ENCODE measurements at regions of chr10 and their contacts with region 1.

Region 1: DNA sequence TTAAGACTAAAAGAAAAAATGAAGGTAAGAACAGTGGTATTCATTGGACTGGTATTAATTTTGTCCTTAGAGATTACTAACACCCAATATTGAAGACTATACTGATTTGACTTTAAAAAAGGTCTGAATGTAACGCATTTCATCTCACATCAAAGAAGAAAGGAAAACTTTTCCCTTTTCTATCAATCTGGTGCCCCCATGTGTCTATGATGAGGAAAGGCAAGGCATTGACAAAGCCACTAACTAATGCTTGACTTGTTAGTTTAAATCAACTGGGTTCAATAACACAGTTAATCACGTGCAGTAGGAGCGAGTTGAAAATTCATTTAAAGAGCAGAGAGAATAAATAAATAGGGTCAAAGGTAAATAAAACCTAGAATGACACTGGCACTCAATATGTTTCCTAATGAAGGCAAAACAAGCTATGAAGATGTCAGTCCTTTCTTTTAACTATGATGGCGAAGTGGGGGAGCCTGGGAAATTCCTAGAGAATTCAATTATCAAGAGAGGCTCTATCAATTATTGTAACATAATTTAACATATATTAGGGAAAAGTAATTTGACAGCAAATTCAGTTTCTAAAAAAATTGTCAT is 180.9 kb downstream of the ANK3 start:
- DNase-seq: peak; percentile 8
- H3K4me3 ChIP-seq: no peak overlapping the region
- H3K27ac ChIP-seq: no peak overlapping the region
- H3K27me3 ChIP-seq: no peaks in the 10 kb centered on the region
- CTCF ChIP-seq: peak; percentile 92

Region 2: DNA sequence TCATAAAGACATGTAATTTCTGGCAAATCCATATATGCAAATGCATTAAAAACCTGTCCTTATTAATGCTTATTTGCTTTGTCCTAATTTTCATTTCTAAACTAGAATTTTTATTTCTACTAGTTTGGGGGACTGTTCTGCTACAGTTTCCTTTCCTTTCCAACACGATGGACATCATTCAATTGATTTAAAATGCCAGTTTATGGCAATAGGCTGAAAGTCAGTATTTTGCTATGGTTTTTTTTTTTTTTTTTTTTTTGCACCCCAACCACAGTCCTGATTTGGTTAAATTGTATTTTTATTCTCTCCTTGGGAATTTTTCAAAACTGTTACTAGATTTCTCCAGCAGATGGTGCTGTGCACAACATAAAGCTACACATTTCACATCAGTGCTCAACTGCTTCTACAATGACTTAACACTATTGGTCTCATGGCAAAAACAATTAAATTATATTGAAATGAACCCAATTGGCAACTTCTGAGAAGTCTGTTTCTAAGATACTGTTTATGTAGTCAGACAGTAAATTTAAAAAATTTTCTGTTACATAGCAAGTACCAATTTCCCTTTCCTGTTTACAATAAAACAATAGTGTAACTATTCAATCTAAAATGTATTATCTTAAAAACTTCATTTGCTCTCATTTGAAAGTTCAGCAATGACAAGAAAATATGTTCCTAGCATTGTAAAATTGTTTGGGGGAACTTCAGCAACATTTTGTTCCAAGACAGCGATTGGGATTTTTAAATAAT is 108.6 kb before region 1 on chr10:
- CTCF ChIA-PET with region 1: interaction called, 155 read pairs
- POLR2A ChIA-PET with region 1: interaction called, 10 read pairs
- DNase-seq: peak; percentile 16
- H3K4me3 ChIP-seq: no peak overlapping the region
- H3K27ac ChIP-seq: no peak overlapping the region
- H3K27me3 ChIP-seq: peaks cover 2% of the 10 kb centered on the region
- CTCF ChIP-seq: peak; percentile 64

Region 3: GRCh38 chr10:60155943-60156683 is 52.7 kb before region 1 on chr10:
- CTCF ChIA-PET with region 1: no interaction called
- POLR2A ChIA-PET with region 1: no interaction called
- DNase-seq: no peak
- H3K4me3 ChIP-seq: no peak overlapping the region
- H3K27ac ChIP-seq: no peak overlapping the region
- H3K27me3 ChIP-seq: peaks cover 3% of the 10 kb centered on the region
- CTCF ChIP-seq: no peak

Region 4: GRCh38 chr10:60170250-60170649 is 38.5 kb before region 1 on chr10:
- CTCF ChIA-PET with region 1: interaction called, 10 read pairs
- POLR2A ChIA-PET with region 1: no interaction called
- DNase-seq: peak; percentile 45
- H3K4me3 ChIP-seq: no peak overlapping the region
- H3K27ac ChIP-seq: no peak overlapping the region
- H3K27me3 ChIP-seq: no peaks in the 10 kb centered on the region
- CTCF ChIP-seq: no peak

Region 5: GRCh38 chr10:60224066-60224705 is 15.4 kb after region 1 on chr10:
- CTCF ChIA-PET with region 1: interaction called, 16 read pairs
- POLR2A ChIA-PET with region 1: no interaction called
- DNase-seq: no peak
- H3K4me3 ChIP-seq: no peak overlapping the region
- H3K27ac ChIP-seq: no peak overlapping the region
- H3K27me3 ChIP-seq: no peaks in the 10 kb centered on the region
- CTCF ChIP-seq: no peak

Region 6: GRCh38 chr10:60286559-60286958 is 77.8 kb after region 1 on chr10:
- CTCF ChIA-PET with region 1: no interaction called
- POLR2A ChIA-PET with region 1: no interaction called
- DNase-seq: no peak
- H3K4me3 ChIP-seq: no peak overlapping the region
- H3K27ac ChIP-seq: no peak overlapping the region
- H3K27me3 ChIP-seq: no peaks in the 10 kb centered on the region
- CTCF ChIP-seq: no peak

Region 7: DNA sequence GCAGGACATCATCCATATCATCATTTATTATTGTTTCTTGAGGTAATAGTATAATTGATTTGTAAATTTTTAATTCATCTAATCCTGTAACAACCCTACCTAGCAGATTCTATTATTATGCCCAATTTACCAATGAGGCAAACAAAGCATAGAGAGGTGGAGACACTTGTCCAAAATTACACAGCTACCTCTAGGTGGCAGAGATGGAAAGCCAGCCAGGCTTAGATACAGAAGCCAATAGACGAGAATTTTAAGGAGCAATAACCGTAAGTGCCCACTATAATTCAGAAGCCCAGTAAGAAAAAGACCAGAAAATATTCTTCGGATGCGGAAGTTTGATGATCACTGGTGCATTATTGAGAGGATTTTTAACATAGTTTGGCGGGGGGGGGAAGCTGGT is 126.9 kb after region 1 on chr10:
- CTCF ChIA-PET with region 1: no interaction called
- POLR2A ChIA-PET with region 1: no interaction called
- DNase-seq: no peak
- H3K4me3 ChIP-seq: no peak overlapping the region
- H3K27ac ChIP-seq: no peak overlapping the region
- H3K27me3 ChIP-seq: no peaks in the 10 kb centered on the region
- CTCF ChIP-seq: 0 out of 2 replicates have a peak, but pooled peaks have one; percentile 15

Region 8: DNA sequence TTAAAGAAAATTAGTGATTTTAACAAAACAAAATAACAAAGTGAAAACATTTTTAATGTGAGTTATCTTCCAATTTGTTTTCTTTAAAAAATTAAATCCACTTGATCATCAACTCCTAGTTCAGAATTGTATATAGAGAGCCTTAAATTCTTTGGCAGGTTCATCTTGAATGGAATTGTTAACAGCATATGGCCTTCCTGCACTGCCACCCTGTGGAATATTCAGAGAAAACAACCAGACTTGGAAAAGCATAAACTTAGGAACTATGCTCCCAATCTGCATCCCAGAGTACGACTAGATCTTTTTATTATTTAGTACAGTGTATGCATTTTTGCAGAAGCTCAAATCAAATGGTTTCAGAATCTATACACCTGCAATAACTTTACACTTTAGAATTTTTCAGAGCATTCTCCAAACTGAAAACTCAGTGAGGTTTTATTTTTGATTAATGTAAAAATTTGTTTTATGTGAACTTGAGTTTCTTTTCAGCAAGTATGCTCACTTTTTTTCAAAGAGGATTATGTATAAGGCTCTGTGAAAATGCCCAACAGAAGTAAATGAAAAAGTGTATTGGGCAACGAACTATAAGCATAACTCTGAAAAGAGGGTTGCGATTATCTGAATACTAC is 225.8 kb after region 1 on chr10:
- CTCF ChIA-PET with region 1: interaction called, 66 read pairs
- POLR2A ChIA-PET with region 1: no interaction called
- DNase-seq: no peak
- H3K4me3 ChIP-seq: no peak overlapping the region
- H3K27ac ChIP-seq: no peak overlapping the region
- H3K27me3 ChIP-seq: no peaks in the 10 kb centered on the region
- CTCF ChIP-seq: peak; percentile 72

Measured in AG04450 (cell line).